Mammary epithelial cell (primary cell): ENCODE measurements at regions of chr7 and their contacts with region 1.

Region 1: DNA sequence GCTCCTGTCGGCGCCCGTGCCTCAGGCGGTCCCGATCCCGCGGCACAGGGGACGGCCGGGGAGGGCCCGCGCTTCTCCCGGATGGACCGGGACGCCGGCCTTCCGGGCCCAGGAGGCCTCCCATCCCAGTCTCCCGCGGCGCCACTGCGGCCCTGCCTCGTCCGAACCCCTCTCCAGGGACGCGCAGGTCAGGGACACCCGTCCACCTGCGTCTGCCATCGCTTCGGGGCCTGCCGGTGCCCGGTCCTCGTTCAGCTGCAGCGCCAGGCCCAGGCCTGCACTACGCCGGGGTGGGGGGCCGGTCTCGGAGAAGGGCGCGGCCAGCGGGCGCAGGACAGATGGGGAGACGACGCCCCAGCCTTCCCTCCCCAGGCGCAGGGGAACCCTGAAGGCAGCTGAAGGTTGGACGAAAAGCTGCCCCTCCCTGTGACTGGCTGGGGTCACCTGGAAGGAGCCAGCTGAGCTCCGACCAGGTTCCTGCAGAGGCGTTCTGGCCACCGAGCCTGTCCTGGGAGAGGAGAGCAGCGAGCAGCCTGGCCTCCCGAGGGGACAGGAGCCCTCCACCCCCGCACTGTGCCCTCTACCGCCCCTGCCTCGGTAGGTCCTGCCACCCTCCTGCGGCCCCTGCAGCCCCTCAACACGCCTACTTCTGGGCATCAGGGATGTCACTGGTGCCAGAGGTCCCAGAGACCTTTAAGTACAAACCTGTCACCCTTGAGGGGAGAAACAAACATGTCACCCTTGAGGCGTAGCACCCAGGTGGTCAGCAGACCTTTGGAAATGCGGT is 84.3 kb downstream of the LANCL2 start:
- DNase-seq: no peak
- H3K4me3 ChIP-seq: no peak overlapping the region
- H3K27ac ChIP-seq: no peak overlapping the region
- H3K4me1 ChIP-seq: peaks cover 3% of the 10 kb centered on the region
- H3K27me3 ChIP-seq: no peaks in the 10 kb centered on the region
- CTCF ChIP-seq: no peak

Region 2: DNA sequence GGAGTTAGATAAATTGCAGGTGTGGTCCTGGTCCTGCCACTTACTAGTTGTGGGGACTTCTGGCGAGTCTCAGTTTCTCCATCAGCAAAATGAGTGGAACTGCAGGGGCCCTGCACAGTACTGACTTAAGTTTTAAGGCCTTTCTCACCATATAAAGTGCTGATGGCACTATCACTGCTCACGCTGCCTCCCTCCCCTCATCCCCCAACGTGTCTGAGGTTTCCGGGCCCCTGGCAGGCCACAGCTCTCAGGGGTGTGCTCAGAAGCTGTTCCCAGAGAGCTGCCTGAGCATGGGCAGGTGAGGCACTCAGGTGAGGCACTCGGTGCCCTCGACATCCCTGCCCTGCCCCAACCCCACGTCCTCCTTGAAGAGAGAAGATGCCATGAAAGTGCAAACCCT is 48.7 kb after region 1 on chr7:
- CTCF ChIA-PET with region 1: no interaction called
- dilution Hi-C with region 1: loop called (anchors 5 kb)
- in situ Hi-C with region 1: no loop called
- intact Hi-C with region 1: no loop called
- DNase-seq: no peak
- H3K4me3 ChIP-seq: no peak overlapping the region
- H3K27ac ChIP-seq: no peak overlapping the region
- H3K4me1 ChIP-seq: no peaks in the 10 kb centered on the region
- H3K27me3 ChIP-seq: no peaks in the 10 kb centered on the region
- CTCF ChIP-seq: no peak

Region 3: GRCh38 chr7:55546829-55547228 is 97.4 kb after region 1 on chr7:
- CTCF ChIA-PET with region 1: interaction called, 8 read pairs
- dilution Hi-C with region 1: no loop called
- in situ Hi-C with region 1: no loop called
- intact Hi-C with region 1: loop called (anchors 5 kb)
- DNase-seq: peak; percentile 94
- H3K4me3 ChIP-seq: no peak overlapping the region
- H3K27ac ChIP-seq: peak overlapping the region; percentile 12
- H3K4me1 ChIP-seq: peaks cover 49% of the 10 kb centered on the region
- H3K27me3 ChIP-seq: no peaks in the 10 kb centered on the region
- CTCF ChIP-seq: no peak